Breast epithelium (tissue), 4 donors: ENCODE measurements at regions of chrX and their contacts with region 1.

Region 1: GRCh38 chrX:45602151-45602550 is 401.5 kb upstream of the DIPK2B start:
- DNase-seq: no peak
- H3K4me3 ChIP-seq: no peak overlapping the region
- H3K27ac ChIP-seq: no peak overlapping the region
- H3K4me1 ChIP-seq: no peaks in the 10 kb centered on the region
- H3K27me3 ChIP-seq: peaks cover 0 to 20% of the 10 kb centered on the region in 2 donors
- CTCF ChIP-seq: no peak
- POLR2A ChIP-seq: no peak

Region 2: DNA sequence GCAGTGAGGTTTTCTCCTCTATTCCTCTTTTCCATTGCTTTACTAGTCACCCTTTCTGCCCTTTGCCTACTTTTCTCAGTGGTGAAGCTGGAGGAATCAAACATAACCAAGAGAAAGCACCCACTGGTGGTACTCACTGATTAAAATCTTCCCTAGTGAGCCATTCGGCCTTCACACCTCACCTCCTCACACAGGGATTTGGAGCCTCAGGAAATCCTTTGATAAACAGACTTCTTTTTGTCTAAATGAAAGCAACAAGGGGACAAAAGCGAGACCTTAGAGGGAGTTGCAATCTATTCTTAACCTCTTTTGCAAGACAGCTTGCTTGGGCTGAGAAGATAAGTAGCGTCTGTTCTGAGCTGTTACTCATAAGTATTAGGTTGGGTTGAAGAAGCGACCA is 370.5 kb after region 1 on chrX:
- intact Hi-C with region 1: loop called (anchors 5 kb)
- DNase-seq: no peak
- H3K4me3 ChIP-seq: no peak overlapping the region
- H3K27ac ChIP-seq: no peak overlapping the region
- H3K4me1 ChIP-seq: no peaks in the 10 kb centered on the region
- H3K27me3 ChIP-seq: peaks cover 0 to 14% of the 10 kb centered on the region in 2 donors
- CTCF ChIP-seq: no peak
- POLR2A ChIP-seq: no peak